OCI-LY7 (cell line): ENCODE measurements at regions of chr15 and their contacts with region 1.

Region 1: DNA sequence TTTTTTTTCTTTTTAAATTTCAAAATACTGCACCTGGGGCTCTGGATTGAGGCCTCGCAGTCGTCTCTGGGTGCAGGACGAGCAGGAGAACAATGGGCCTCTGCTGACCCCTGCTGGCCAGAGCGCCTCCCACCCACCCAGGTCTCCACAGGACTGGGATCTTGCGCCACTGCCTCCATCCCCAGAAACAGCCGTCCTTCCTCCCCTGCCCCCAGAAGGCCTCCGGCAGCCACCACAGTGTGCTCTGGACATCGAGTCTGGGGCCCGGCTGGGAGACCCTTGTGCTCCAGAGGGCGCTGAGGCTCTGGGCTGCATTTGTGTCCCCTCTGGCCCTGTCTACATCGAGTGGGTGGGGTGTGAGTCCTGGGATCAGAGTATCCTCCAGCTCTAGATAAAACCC is 6.6 kb upstream of the ACSBG1 start:
- DNase-seq: peak; percentile 73
- H3K4me3 ChIP-seq: no peak overlapping the region
- H3K27ac ChIP-seq: no peak overlapping the region
- H3K4me1 ChIP-seq: no peaks in the 10 kb centered on the region
- CTCF ChIP-seq: peak; percentile 88

Region 2: GRCh38 chr15:77959432-77959879 is 281.6 kb before region 1 on chr15:
- CTCF ChIA-PET with region 1: no interaction called
- POLR2A ChIA-PET with region 1: no interaction called
- intact Hi-C with region 1: loop called (anchors 2 kb)
- DNase-seq: peak; percentile 75
- H3K4me3 ChIP-seq: peak overlapping the region; percentile 34
- H3K27ac ChIP-seq: no peak overlapping the region
- H3K4me1 ChIP-seq: peaks cover 14% of the 10 kb centered on the region
- CTCF ChIP-seq: peak; percentile 93

Region 3: DNA sequence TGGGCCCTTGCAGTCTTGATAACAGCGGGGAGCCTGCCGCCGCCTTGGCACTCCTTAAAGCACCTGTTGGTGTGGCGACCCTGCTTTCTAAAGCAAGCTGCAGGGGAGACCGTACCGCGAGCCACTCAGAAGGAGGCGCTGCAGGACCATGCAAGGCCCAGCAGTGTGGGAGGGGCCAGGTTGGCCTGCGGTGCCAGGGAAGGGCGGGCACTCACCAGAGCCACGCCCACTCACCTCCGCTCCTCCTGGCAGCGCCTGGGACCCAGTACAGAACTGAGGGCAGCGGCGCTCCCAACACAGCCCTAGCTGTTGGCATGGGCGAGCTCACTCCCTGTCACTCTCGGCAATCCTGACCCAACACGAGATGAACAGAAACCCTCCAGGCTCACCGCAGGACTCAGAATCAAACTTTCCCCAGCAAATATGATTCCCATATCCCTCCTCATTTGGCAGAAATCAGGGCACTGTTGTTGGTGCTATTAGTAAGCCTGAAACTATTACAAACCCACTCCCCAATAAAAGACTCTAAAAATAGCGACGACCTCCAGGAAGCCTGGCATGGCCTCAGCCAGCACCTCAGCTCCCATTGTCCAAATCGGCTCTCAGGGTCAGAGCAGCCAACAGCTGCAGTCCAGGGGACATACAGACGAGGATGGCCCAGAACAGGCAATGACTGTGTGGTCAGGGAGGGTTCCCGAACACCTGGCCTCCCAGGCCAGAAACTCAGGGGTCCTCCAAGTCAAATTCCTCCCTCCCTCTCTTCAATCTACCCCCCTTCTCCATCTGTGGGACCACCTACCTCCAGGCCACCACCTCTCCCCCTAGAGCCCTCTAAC is 240.7 kb before region 1 on chr15:
- CTCF ChIA-PET with region 1: no interaction called
- POLR2A ChIA-PET with region 1: no interaction called
- intact Hi-C with region 1: loop called (anchors 2 kb)
- DNase-seq: peak; percentile 90
- H3K4me3 ChIP-seq: no peak overlapping the region
- H3K27ac ChIP-seq: no peak overlapping the region
- H3K4me1 ChIP-seq: peaks cover 4% of the 10 kb centered on the region
- CTCF ChIP-seq: peak; percentile 84

Region 4: GRCh38 chr15:78177447-78177873 is 63.5 kb before region 1 on chr15:
- CTCF ChIA-PET with region 1: no interaction called
- POLR2A ChIA-PET with region 1: no interaction called
- intact Hi-C with region 1: loop called (anchors 1 kb)
- DNase-seq: peak; percentile 62
- H3K4me3 ChIP-seq: no peak overlapping the region
- H3K27ac ChIP-seq: no peak overlapping the region
- H3K4me1 ChIP-seq: peaks cover 27% of the 10 kb centered on the region
- CTCF ChIP-seq: peak; percentile 84